ENCODE measurements at regions of chr18 and their contacts with region 1.

Region 1: GRCh38 chr18:73842795-73843394 is 304.7 kb downstream of the FBXO15 start:
- H3K4me3 Mint-ChIP-seq: peak overlapping the region; percentile 13
- H3K27ac Mint-ChIP-seq: no peak overlapping the region
- H3K4me1 Mint-ChIP-seq: no peaks in the 10 kb centered on the region
- H3K27me3 Mint-ChIP-seq: peaks cover 1% of the 10 kb centered on the region

Region 2: GRCh38 chr18:72762515-72763122 is 1080.3 kb before region 1 on chr18:
- intact Hi-C with region 1: loop called (anchors 5 kb)
- H3K4me3 Mint-ChIP-seq: no peak overlapping the region
- H3K27ac Mint-ChIP-seq: no peak overlapping the region
- H3K4me1 Mint-ChIP-seq: no peaks in the 10 kb centered on the region
- H3K27me3 Mint-ChIP-seq: no peaks in the 10 kb centered on the region

Region 3: DNA sequence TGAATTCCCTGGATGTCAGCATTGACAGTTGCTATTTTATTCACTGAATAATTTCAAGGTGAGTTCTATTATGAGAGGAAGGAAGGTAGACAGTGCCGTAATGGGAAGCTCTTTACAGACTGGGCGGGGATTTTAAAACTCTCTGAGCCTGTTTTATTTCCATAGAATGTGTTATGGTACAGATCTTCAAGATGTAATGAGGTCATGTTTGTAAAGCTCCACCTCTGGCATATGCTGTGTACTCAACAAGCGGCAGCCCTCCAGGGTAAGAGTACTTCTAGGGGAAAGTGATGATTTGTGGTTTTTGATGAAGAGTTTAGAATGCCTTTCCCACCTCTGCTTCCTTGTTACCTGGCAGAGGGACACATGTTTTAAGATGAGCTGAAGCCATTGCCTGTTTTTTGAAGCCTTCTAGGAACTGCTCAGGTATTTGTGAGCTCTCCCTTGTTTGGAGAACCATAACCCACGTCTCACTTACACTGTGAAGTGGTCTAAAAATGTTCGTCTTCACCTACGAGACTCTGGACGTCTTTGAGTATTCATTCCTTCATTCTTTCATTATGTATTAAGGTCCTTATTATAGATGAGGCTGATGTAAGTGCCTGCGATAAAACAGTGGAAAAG is 1114.8 kb after region 1 on chr18:
- intact Hi-C with region 1: no loop called
- H3K4me3 Mint-ChIP-seq: no peak overlapping the region
- H3K27ac Mint-ChIP-seq: no peak overlapping the region
- H3K4me1 Mint-ChIP-seq: peaks cover 11% of the 10 kb centered on the region
- H3K27me3 Mint-ChIP-seq: no peaks in the 10 kb centered on the region